CD8-positive, alpha-beta T cell (primary cell): ENCODE measurements at regions of chr3 and their contacts with region 1.

Region 1: DNA sequence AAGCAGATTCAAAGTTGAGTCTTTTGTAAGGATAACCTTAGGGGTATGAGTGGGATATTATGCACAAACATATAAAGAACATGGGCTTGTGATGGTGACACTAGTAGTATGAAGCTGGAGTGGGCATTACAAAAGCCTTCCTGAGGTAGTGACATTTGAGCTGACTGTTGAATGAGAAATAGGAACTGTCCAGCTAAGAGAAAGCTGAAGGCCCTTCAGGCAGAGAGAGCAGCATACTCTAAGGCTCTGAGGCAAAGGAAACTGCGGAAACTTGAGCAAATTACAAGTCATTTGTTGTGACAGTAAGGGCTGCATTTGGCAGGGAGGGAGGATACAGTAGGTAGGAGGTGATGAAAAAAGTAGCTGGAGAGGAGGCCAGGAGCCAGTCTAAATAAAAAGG is 190.7 kb upstream of the CD96 start:
- DNase-seq: no peak
- ATAC-seq: no peak
- H3K4me3 ChIP-seq: no peak overlapping the region
- H3K4me3 Mint-ChIP-seq: no peak overlapping the region
- H3K27ac ChIP-seq: no peak overlapping the region
- H3K27ac Mint-ChIP-seq: no peak overlapping the region
- H3K4me1 ChIP-seq: no peaks in the 10 kb centered on the region
- H3K4me1 Mint-ChIP-seq: no peaks in the 10 kb centered on the region
- H3K27me3 ChIP-seq: no peaks in the 10 kb centered on the region
- H3K27me3 Mint-ChIP-seq: no peaks in the 10 kb centered on the region
- CTCF ChIP-seq: no peak

Region 2: GRCh38 chr3:111338059-111338698 is 13.2 kb before region 1 on chr3:
- CTCF ChIA-PET with region 1: interaction called, 11 read pairs
- POLR2A ChIA-PET with region 1: no interaction called
- intact Hi-C with region 1: no loop called
- DNase-seq: peak in 8 of 9 experiments; percentile 11 to 63 (median 40)
- ATAC-seq: no peak
- H3K4me3 ChIP-seq: no peak overlapping the region
- H3K4me3 Mint-ChIP-seq: no peak overlapping the region
- H3K27ac ChIP-seq: no peak overlapping the region
- H3K27ac Mint-ChIP-seq: no peak overlapping the region
- H3K4me1 ChIP-seq: no peaks in the 10 kb centered on the region
- H3K4me1 Mint-ChIP-seq: peaks cover 10% of the 10 kb centered on the region
- H3K27me3 ChIP-seq: no peaks in the 10 kb centered on the region
- H3K27me3 Mint-ChIP-seq: no peaks in the 10 kb centered on the region
- CTCF ChIP-seq: peak; percentile 53